Common myeloid progenitor, CD34-positive (primary cell): ENCODE measurements at regions of chr15 and their contacts with region 1.

Region 1: DNA sequence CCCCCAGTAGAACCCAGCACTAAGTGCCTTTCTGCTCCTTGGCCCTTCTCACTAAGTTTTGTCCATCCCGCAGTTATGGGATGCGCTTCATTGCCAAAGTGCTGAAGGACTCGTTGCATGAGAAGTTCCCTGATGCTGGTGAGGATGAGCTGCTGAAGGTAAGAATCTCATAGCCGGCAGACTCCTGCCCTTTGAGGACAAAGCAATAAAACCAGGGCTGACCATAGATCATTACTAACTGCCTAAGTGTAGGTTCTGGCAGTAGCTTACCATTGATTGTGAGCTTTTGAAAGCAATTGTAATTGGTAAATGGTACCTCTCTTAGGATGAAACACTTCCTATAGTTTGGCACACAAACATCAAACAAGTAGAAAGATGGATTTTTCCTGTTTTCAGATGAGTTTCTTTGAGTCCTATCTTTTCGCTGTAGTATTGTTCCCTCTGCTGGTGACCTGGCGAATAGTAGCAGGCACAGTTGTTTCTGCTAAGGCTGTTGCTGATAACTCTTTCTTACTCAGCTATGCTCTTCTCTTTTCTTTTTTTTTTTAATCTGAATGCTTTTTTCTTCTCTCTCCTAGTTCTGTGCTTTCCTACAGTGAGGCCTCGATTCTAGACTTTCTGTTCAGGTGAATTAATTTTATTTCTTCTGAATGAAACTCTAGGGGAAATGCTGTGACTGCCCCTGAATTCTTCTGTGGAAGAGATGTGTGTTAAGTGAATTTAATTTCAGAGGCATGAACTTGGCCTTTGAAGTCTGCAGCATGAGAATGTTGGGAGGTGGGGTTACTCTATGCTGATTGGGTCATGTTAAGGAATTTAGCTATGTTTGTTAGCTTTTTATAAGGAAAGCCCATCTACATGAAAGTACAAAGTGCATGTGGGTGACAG is 47.4 kb upstream of the CRTC3 start:
- DNase-seq: peak; percentile 65 to 74 (median 65)
- H3K4me3 ChIP-seq: no peak overlapping the region
- H3K27ac ChIP-seq: no peak overlapping the region
- H3K4me1 ChIP-seq: peaks cover 5 to 18% (median 10%) of the 10 kb centered on the region in 4 experiments
- H3K27me3 ChIP-seq: no peaks in the 10 kb centered on the region

Region 2: GRCh38 chr15:89230277-89230676 is 1252.1 kb before region 1 on chr15:
- CTCF ChIA-PET with region 1: no interaction called
- POLR2A ChIA-PET with region 1: no interaction called
- DNase-seq: no peak
- H3K4me3 ChIP-seq: no peak overlapping the region
- H3K27ac ChIP-seq: no peak overlapping the region
- H3K4me1 ChIP-seq: no peaks in the 10 kb centered on the region
- H3K27me3 ChIP-seq: no peaks in the 10 kb centered on the region

Region 3: DNA sequence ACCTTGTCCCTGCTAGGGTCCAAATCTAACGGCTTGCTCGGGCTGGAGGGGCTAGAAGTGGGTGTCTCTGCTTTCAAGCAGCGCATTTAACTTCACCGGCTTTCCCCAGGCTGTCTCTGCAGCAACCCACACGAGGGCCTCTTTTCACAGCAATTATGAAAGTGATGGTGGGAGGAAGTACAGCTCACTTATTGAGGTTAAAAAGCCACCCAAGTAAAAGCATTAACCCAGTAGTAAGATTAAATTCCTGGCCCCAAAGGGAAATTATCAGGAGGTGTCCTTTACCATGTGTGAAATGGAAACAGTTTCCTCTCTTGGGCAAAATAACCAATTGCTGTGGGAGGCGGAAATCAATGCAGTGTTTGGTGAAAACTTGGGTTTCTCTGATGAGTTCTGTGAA is 175.8 kb before region 1 on chr15:
- CTCF ChIA-PET with region 1: interaction called, 10 read pairs
- POLR2A ChIA-PET with region 1: no interaction called
- DNase-seq: peak in 2 of 3 donors; percentile 30 to 44
- H3K4me3 ChIP-seq: no peak overlapping the region
- H3K27ac ChIP-seq: no peak overlapping the region
- H3K4me1 ChIP-seq: peaks cover 0 to 17% (median 4%) of the 10 kb centered on the region in 4 experiments
- H3K27me3 ChIP-seq: no peaks in the 10 kb centered on the region

Region 4: DNA sequence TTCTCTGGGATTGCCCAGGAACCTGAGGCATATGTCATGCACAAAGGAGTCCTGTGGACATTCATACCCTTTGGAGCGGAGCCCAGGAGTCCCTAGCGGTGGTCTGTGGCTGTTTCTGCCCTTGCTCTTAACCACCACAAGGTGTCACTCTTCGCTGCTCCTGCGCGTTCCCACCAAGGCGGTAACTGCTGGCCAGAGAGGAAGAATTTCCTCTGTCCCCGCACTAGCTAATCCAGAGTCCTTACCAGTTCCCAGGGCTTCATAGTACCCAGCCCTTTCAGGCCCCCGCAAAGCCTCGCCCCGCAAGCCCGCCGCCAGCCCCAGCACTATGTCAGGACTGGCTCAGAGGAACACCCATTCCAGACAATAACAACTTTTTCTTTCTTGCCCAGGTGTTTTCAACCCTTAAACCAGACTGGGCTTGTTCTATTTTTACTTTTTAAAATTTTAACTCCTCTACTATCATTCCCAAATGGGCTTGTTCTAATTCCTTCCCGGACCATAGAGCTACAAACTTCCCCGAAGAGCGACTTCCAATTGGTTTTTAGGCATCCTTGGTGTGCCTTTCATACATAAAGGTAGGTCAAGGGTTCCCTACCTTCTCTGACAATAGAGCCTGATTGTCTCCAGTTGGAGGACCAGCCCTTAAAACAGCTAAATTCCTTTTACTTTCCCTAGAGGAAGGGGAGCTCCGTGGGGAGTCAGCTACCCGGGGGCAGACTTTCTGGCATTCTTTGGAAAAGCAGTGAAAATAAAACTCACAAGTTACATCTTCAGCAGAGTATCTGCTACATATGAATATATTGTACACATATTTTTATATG is 162.1 kb before region 1 on chr15:
- CTCF ChIA-PET with region 1: interaction called, 134 read pairs
- POLR2A ChIA-PET with region 1: interaction called, 6 read pairs
- DNase-seq: peak; percentile 77 to 87 (median 83)
- H3K4me3 ChIP-seq: peak overlapping the region in 5 of 7 experiments; percentile 27 to 48 (median 35)
- H3K27ac ChIP-seq: no peak overlapping the region
- H3K4me1 ChIP-seq: peaks cover 0 to 5% (median 2%) of the 10 kb centered on the region in 4 experiments
- H3K27me3 ChIP-seq: peaks cover 0 to 2% (median 0%) of the 10 kb centered on the region in 5 experiments

Region 5: DNA sequence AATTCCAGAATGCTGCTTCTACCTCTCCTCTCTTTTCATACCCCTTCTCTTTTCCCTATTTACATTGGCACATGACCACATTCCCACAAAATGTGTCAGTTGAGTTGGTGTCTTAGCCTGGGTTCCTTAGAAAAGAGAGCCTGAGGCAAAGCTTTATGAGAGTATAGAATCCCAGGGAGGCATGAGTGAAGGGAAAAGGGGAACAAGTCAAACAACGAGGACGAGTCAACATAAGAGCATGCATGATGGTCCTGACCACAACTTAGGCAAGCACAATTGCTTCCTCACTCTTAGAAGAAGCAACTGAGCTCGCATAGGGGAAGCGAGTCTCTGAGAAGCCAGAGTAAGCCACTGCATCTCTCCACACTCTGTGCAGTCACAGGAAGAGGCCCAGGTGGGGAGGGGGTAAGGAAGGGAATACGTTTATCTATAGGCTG is 145.6 kb before region 1 on chr15:
- CTCF ChIA-PET with region 1: interaction called, 17 read pairs
- POLR2A ChIA-PET with region 1: no interaction called
- DNase-seq: peak; percentile 52 to 89 (median 84)
- H3K4me3 ChIP-seq: peak overlapping the region in 2 of 7 experiments; percentile 20 to 33
- H3K27ac ChIP-seq: no peak overlapping the region
- H3K4me1 ChIP-seq: peaks cover 8 to 23% (median 10%) of the 10 kb centered on the region in 4 experiments
- H3K27me3 ChIP-seq: no peaks in the 10 kb centered on the region

Region 6: DNA sequence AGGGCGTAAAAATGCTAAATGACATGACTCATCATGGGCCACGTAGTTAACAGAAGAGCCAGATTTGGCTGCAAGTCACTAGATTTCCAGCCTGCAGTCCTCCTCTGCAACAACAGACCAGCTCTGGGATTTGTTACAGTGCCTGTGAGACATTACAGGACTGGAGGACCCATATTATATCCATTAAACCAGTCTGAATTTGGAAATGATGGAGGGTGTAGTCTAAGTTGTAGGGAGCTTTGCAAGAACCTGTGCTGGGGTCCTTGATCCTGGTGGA is 119.5 kb before region 1 on chr15:
- CTCF ChIA-PET with region 1: interaction called, 88 read pairs
- POLR2A ChIA-PET with region 1: interaction called, 3 read pairs
- DNase-seq: peak in 1 of 3 donors; percentile 23
- H3K4me3 ChIP-seq: no peak overlapping the region
- H3K27ac ChIP-seq: no peak overlapping the region
- H3K4me1 ChIP-seq: peaks cover 0 to 27% (median 5%) of the 10 kb centered on the region in 4 experiments
- H3K27me3 ChIP-seq: peaks cover 0 to 10% (median 4%) of the 10 kb centered on the region in 5 experiments

Region 7: DNA sequence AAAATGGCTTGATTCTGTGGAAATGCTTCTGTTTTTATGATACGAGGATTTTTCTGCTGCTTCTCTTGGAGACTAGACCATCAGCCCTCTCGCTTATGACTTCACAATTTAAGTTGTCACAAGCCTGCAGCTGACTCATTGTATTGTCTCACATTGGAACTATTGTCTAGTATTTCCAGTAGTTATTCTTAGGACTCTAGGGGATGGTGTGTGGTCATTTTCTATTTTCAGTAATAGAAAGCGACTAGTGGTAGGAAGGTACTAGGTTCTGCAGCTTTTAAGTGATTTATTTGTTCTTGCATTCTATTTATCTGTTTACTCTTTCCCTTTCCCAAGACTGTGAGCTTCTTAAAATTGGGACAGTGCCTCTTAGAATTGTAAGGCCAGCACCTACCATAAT is 19.0 kb before region 1 on chr15:
- CTCF ChIA-PET with region 1: interaction called, 18 read pairs
- POLR2A ChIA-PET with region 1: no interaction called
- DNase-seq: no peak
- H3K4me3 ChIP-seq: no peak overlapping the region
- H3K27ac ChIP-seq: no peak overlapping the region
- H3K4me1 ChIP-seq: no peaks in the 10 kb centered on the region
- H3K27me3 ChIP-seq: no peaks in the 10 kb centered on the region

Region 8: DNA sequence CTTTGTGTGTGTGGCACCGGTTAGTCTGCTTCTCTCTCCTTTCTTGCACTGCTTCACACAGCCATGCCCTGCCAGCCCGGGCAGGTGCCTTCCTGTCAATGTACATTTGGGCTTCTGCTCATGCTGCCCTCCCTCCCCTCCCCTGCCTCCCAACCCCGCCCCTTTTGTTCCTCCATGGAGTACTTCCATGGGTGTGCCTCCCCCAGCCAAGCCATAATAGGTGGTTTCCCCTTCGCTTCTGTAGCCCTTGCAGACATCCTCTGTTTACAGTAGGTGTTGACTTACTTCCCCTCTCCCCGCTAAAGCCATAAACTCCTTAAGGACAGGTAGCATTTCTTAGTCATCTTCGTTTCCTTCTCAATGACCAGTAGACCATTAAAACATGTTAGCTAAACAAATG is 15.5 kb after region 1 on chr15:
- CTCF ChIA-PET with region 1: interaction called, 12 read pairs
- POLR2A ChIA-PET with region 1: no interaction called
- DNase-seq: peak in 2 of 3 donors; percentile 12 to 28
- H3K4me3 ChIP-seq: no peak overlapping the region
- H3K27ac ChIP-seq: no peak overlapping the region
- H3K4me1 ChIP-seq: peaks cover 0 to 15% (median 6%) of the 10 kb centered on the region in 4 experiments
- H3K27me3 ChIP-seq: no peaks in the 10 kb centered on the region

Region 9: GRCh38 chr15:91572114-91572540 is 1089.8 kb after region 1 on chr15:
- CTCF ChIA-PET with region 1: no interaction called
- POLR2A ChIA-PET with region 1: no interaction called
- DNase-seq: no peak
- H3K4me3 ChIP-seq: no peak overlapping the region
- H3K27ac ChIP-seq: no peak overlapping the region
- H3K4me1 ChIP-seq: no peaks in the 10 kb centered on the region
- H3K27me3 ChIP-seq: no peaks in the 10 kb centered on the region